ENCODE measurements at regions of chr1 and their contacts with region 1.

Region 1: DNA sequence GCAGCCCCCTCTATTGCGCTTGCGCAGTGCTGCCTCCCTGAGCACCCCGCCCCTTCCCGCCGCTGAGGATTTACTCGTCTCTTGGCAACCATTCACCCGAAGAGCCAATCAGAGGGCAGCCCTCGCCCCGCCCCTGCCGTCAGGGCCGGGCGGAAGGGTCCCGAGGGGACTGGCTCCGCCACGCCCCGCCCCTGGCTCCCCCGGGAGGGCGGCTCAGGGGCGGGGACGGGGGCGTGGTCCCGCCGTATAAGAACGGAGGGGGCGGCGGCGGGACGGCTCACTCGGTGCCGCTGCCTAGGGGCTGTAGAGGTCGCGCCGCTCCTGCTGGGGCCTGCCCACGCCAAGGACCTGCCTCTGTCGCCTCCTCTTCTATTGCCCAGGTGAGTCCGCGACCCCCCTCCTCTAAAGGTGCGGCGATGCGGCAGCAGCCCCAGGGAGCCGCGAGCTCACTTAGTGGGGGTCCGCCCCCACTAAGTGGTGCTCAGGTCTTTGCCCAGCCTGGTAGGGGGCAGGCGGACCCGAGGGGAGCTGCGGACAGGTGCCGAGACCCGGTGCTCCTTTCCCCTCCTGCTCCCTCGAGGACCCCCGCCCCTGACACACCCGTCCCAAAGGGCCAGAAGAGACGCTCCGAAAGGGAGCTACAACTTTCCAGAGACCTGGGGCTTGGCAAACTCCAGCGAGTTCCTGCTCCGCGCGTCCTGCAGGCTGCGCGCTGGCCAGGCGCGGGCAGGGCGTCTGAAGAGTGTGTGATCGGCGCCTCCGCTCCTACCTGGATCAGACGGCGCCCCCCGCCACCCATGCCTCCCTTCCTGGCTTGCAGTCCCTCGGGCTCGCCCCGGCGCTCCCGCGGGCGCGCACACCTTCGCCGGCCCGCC is at the start of gene TENT5C:
- DNase-seq: peak; percentile 99 to 100 (median 99)
- H3K4me3 ChIP-seq: peak within 1 kb of the TSS; percentile 93 to 98
- H3K4me3 Mint-ChIP-seq: peak within 1 kb of the TSS; percentile 91 to 100 (median 98)
- H3K27ac ChIP-seq: peak within 1 kb of the TSS; percentile 92
- H3K27ac Mint-ChIP-seq: peak within 1 kb of the TSS; percentile 94 to 100 (median 99)
- H3K4me1 ChIP-seq: peaks cover 43% of the 10 kb centered on the region
- H3K4me1 Mint-ChIP-seq: peaks cover 28 to 59% (median 37%) of the 10 kb centered on the region in 4 donors
- H3K27me3 ChIP-seq: no peaks in the 10 kb centered on the region
- H3K27me3 Mint-ChIP-seq: no peaks in the 10 kb centered on the region
- total RNA-seq, gene TENT5C: 13.9 to 14.8 TPM

Region 2: DNA sequence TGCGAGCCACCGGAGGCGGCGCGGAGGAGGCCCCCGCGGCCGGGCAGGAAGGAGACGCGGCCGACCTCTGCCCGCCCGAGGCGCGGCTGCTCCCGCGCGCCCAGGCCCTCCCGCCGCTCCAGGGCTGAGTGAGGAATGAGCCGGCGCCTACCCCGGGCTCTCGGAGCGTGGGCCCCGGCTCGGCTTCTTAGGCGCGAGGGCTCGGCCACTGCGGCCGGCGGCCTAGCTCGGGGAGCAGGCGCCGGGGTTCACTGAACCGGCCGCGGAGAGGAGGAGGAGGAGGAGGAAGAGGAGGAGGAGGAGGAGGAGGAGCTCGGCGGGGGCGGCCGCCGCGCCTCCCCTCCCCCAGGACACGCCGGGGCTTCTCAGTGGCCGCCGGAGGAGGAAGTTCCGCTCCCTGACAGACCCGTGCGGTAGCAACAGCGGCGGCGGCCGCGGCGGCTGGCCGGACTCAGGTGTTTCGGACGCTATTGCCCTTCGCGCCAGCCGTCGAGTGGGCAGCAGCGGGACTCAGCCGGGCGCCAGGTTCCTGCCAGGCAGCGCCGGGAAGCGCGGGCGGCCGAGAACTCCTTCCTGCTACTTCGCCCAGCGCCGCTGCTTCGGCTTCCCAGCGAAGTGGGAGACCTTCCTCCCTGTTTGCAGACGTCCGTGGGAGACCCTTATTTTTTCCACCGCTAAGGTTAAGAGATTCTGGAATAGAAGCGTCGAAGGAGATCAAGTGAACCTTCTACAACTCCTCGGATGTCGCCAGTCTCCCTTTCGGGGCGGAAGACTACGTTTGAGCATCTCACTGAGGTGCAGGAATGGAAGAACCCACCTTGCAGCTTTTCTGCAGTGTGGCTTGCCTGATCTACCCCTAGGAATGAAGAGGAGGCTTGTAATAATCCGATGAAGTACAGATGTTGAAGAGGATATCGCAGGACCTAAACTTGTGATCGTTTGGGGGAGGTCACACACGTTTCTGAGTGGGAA is 238.7 kb before region 1 on chr1 and contains the start of gene MAN1A2:
- CTCF ChIA-PET with region 1: no interaction called
- POLR2A ChIA-PET with region 1: interaction called, 18 read pairs
- intact Hi-C with region 1: loop called (anchors 1 kb)
- DNase-seq: peak; percentile 66 to 84 (median 69)
- H3K4me3 ChIP-seq: peak within 1 kb of the TSS; percentile 72 to 92
- H3K4me3 Mint-ChIP-seq: peak within 1 kb of the TSS; percentile 93 to 97 (median 96)
- H3K27ac ChIP-seq: peak within 1 kb of the TSS; percentile 70
- H3K27ac Mint-ChIP-seq: peak within 1 kb of the TSS; percentile 96 to 99 (median 97)
- H3K4me1 ChIP-seq: peaks cover 74% of the 10 kb centered on the region
- H3K4me1 Mint-ChIP-seq: peaks cover 53 to 84% (median 63%) of the 10 kb centered on the region in 4 donors
- H3K27me3 ChIP-seq: no peaks in the 10 kb centered on the region
- H3K27me3 Mint-ChIP-seq: no peaks in the 10 kb centered on the region
- total RNA-seq, gene MAN1A2: 57.0 to 66.5 TPM

Region 3: GRCh38 chr1:117632269-117633067 is 26.5 kb after region 1 on chr1:
- CTCF ChIA-PET with region 1: interaction called, 6 read pairs
- POLR2A ChIA-PET with region 1: interaction called, 24 read pairs
- intact Hi-C with region 1: no loop called
- DNase-seq: no peak
- H3K4me3 ChIP-seq: no peak overlapping the region
- H3K4me3 Mint-ChIP-seq: peak overlapping the region in 2 of 8 donors; percentile 10 to 49
- H3K27ac ChIP-seq: no peak overlapping the region
- H3K27ac Mint-ChIP-seq: peak overlapping the region in 2 of 7 donors; percentile 7 to 76
- H3K4me1 ChIP-seq: peaks cover 40% of the 10 kb centered on the region
- H3K4me1 Mint-ChIP-seq: peaks cover 21 to 69% (median 47%) of the 10 kb centered on the region in 4 donors
- H3K27me3 ChIP-seq: no peaks in the 10 kb centered on the region
- H3K27me3 Mint-ChIP-seq: no peaks in the 10 kb centered on the region

Region 4: DNA sequence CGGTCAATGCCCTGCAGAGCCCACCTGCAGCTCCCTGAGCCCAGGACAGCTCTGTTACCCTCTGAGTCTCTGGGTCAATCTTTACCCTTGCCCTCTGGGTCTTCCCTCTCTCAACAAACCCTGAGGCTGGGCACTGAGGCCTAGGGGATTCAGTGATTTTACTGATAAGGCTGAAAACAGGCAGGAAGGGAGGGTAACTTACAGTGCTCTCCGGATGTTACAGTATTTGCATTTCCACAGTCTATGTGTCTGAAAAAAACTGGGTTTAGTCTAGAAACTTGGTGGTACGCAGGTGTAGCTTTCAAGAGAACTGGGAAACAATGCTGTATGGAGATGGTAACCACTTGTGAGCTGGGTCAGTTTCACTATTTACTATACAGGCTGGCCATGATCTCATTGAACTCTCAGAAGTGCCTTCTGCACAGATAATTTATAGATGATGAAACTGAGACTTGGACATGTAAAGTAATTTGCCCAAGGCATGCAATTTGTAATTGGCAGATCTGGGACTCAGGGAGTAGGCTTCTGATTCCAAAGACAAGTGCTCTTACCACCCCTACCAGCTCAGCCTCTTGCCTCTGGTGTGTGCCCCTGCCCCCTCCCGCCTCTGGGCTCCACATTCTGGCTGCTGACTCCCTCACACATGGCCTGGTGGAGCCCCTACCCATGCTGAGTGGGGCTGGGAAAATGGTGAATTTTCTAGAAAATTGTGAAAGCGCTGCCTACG is 48.6 kb after region 1 on chr1:
- CTCF ChIA-PET with region 1: interaction called, 77 read pairs
- POLR2A ChIA-PET with region 1: interaction called, 493 read pairs
- intact Hi-C with region 1: loop called (anchors 1 kb)
- DNase-seq: peak in 4 of 5 donors; percentile 31 to 44 (median 37)
- H3K4me3 ChIP-seq: peak overlapping the region; percentile 8 to 20
- H3K4me3 Mint-ChIP-seq: peak overlapping the region; percentile 52 to 88 (median 76)
- H3K27ac ChIP-seq: peak overlapping the region; percentile 9
- H3K27ac Mint-ChIP-seq: peak overlapping the region; percentile 81 to 99 (median 94)
- H3K4me1 ChIP-seq: peaks cover 95% of the 10 kb centered on the region
- H3K4me1 Mint-ChIP-seq: peaks cover 75 to 92% (median 86%) of the 10 kb centered on the region in 4 donors
- H3K27me3 ChIP-seq: no peaks in the 10 kb centered on the region
- H3K27me3 Mint-ChIP-seq: no peaks in the 10 kb centered on the region

Region 5: DNA sequence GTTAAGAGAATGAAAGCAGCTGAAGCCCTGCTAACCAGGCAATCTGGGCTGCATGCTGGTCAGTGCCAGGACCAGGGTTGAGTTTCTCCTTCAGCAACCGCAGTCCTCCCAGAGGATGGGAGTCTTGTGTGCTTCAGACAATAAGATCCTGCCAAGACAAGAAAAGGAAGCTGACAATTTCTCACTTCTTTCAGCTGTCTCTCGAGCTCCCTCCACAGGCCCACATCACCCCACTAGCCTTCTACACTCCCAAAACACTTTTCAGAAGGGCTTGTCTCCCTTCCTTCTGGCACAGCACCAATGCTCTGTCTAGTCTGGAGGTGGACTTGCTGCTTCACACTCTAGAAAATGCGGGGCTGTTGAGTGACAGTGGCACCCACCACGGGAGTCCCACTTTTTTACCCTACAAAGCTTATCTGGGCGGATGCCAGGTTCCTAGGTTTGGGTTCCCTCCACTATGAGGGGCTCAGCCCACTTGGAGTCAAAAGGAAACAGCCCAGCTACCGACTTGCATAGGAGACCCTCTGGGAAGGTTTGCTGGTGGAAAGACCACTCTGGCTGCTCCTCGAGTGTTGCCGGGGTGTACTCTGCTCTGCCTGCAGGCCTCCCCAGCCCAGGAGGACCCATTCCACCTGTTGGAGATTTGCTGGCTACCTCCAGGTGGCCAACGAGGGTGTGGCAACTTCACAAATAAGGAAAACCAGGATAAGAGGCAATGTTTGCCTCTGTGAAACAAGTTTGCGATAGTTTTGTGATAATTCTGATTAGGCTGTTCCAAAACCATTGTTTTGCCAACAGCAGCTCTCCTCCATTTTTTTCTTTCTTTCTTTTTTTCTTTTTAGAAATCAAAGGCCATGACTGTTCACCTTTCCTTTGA is 68.7 kb after region 1 on chr1:
- CTCF ChIA-PET with region 1: interaction called, 135 read pairs
- POLR2A ChIA-PET with region 1: interaction called, 54 read pairs
- intact Hi-C with region 1: loop called (anchors 1 kb)
- DNase-seq: peak; percentile 64 to 72 (median 66)
- H3K4me3 ChIP-seq: no peak overlapping the region
- H3K4me3 Mint-ChIP-seq: no peak overlapping the region
- H3K27ac ChIP-seq: no peak overlapping the region
- H3K27ac Mint-ChIP-seq: peak overlapping the region in 6 of 7 donors; percentile 3 to 88 (median 74)
- H3K4me1 ChIP-seq: peaks cover 8% of the 10 kb centered on the region
- H3K4me1 Mint-ChIP-seq: peaks cover 5 to 9% (median 7%) of the 10 kb centered on the region in 4 donors
- H3K27me3 ChIP-seq: no peaks in the 10 kb centered on the region
- H3K27me3 Mint-ChIP-seq: peaks cover 0 to 2% of the 10 kb centered on the region in 2 donors

Region 6: DNA sequence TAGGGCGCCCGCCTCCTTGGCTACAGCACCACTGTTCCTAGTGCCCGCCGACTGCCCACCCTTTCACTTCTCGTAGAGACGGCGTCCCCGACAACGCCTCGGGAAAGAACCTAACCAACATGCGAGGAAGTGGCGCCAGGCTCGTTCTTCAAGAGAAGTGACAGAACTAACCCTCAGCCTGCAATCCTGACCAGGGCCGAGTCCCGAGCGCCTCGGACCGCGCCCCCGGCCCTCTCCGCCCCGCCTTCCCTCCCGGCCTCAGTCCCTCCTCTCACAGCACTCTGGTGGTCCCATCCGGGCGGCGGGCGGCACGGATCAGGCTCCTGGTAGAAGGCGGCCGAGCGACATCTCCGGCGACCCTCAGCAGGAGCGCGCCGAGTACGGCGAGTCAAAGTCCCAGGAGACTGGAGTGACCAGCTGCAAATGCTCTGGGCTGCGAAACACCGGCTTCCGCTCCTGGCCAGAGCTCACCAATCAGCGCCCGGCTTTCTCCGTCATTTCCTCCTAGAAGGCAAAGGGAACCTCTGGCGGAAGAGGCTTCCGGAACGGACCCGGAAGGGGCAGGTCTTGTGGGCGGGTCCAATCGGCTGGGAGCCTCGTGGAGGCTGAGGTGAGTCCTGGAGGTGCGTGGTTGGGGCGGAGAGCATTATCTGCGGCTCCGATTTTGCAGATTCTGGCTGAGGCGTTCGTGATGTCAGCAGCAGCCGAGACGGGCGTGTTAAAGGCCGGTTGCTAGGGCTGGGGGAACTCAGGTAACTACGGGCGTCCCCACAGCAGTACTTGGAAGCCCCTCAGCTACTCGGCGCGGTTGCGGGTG is 323.4 kb after region 1 on chr1 and contains the starts of genes GDAP2 and WDR3:
- CTCF ChIA-PET with region 1: interaction called, 3 read pairs
- POLR2A ChIA-PET with region 1: no interaction called
- intact Hi-C with region 1: loop called (anchors 2 kb)
- DNase-seq: peak; percentile 94 to 99 (median 97)
- H3K4me3 ChIP-seq: peak within 1 kb of the TSS; percentile 66 to 81
- H3K4me3 Mint-ChIP-seq: peak within 1 kb of the TSS; percentile 94 to 97 (median 96)
- H3K27ac ChIP-seq: peak within 1 kb of the TSS; percentile 89
- H3K27ac Mint-ChIP-seq: peak within 1 kb of the TSS; percentile 93 to 99 (median 97)
- H3K4me1 ChIP-seq: peaks cover 41% of the 10 kb centered on the region
- H3K4me1 Mint-ChIP-seq: peaks cover 39 to 63% (median 51%) of the 10 kb centered on the region in 4 donors
- H3K27me3 ChIP-seq: no peaks in the 10 kb centered on the region
- H3K27me3 Mint-ChIP-seq: no peaks in the 10 kb centered on the region
- total RNA-seq, gene GDAP2: 28.1 to 29.5 TPM
- total RNA-seq, gene WDR3: 26.5 to 29.3 TPM